ENCODE measurements at regions of chr16 and their contacts with region 1.

Region 1: DNA sequence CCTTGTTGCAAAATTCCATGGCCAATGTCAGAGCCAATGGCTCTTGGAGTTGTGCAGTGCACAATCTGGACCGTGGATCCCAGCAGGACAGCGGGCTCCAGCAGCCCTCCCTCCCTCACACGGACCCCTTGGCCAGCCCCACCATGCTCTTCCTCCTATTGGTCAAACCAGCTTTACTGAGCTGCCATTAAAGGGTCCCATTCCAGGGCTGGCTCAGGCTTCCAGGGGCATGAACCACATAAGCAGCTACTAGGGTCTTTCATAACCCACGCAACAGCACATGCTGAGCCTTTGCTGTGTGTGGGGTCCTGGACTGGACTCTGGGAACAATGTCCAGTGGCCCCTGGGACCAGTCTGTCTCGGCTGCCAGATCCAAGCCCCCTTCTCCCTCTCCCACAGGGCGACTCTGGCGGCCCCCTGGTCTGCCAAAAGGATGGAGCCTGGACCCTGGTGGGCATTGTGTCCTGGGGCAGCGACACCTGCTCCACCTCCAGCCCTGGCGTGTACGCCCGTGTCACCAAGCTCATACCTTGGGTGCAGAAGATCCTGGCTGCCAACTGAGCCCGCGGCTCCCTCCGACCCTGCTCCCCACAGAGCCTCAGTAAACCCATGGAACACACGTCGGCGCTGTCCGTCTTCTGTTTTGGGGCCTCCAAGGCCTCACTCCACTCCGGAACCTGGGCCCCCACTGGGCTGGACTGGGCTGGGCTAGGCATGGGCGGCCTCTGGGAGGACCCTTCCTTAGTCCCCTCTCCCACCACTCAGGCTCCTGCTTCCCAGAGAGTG is 5.7 kb downstream of the CTRB1 start:
- DNase-seq: no peak
- ATAC-seq: no peak
- H3K4me3 ChIP-seq: no peak overlapping the region
- H3K27ac ChIP-seq: no peak overlapping the region
- H3K4me1 ChIP-seq: no peaks in the 10 kb centered on the region
- H3K27me3 ChIP-seq: no peaks in the 10 kb centered on the region
- CTCF ChIP-seq: no peak

Region 2: GRCh38 chr16:74771656-74772315 is 452.7 kb before region 1 on chr16:
- intact Hi-C with region 1: no loop called
- DNase-seq: no peak
- ATAC-seq: no peak
- H3K4me3 ChIP-seq: no peak overlapping the region
- H3K27ac ChIP-seq: no peak overlapping the region
- H3K4me1 ChIP-seq: peaks cover 3% of the 10 kb centered on the region
- H3K27me3 ChIP-seq: peaks cover 36% of the 10 kb centered on the region
- CTCF ChIP-seq: no peak

Region 3: DNA sequence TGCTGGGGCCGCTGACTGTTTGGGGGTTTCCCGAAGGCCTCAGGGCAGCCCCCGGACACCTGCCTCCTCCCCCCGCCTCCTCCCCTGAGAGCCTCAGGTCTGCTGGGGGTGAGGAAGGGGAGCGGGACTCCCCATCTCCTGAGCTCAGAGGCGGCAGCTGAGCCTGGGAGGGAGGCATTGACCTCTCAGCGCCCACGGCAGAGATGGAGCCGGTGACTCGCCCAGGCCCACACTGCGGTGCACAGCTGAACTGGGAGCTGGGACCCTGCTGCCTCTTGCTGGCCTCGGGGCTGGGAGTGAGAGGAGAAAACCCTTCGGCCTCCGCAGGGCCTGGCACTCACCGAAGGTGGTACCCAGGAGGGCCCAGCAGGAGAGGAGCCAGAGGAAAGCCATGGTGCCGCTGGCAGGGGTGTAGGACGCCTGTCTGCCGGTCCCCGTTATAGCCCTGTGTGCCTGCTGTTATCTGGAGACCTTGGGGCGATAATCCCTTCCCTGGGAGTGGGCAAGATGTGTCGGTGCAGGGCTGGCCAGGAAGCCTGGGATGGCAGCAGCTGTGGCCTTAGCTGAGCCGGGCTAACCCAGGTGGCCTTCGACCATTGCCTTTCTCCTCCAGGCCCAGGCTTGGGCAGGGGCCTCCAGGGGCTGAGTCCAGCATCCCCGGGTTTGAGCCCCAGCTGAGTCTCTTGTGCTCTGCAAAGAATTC is 17.6 kb before region 1 on chr16 and contains the start of gene CTRB2:
- intact Hi-C with region 1: loop called (anchors 2 kb)
- DNase-seq: no peak
- ATAC-seq: no peak
- H3K4me3 ChIP-seq: no peak within 1 kb of the TSS
- H3K27ac ChIP-seq: no peak within 1 kb of the TSS
- H3K4me1 ChIP-seq: no peaks in the 10 kb centered on the region
- H3K27me3 ChIP-seq: no peaks in the 10 kb centered on the region
- CTCF ChIP-seq: no peak
- total RNA-seq, gene CTRB2: 0.78 TPM

Region 4: DNA sequence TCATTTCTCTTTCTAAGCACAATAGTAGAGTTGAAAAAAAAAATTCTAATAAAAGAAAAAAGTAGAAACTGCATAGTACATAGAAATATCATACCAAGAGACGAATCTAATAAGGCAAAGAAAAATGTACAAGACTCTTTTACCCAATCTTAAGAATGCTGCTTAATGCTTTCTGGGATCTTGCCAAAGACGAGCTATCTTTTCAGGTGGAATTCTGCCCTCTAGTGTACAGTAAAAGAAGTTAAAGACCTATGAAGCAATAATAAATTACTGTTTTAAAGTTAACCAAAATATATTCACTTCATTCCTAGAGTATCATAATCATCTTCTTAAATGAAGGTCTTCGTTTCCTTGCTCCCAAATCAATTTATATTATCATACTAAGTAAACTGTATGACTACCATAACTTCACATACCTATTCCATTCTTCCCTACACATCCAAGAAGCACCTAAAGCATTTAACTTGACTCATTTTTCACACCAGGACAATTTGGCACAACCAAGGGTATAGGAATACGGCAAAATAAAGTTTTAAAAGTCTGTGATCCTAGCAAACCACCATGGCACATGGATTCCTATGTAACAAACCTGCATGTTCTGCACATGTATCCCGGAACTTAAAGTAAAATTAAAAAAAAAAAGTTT is 161.1 kb after region 1 on chr16:
- intact Hi-C with region 1: loop called (anchors 5 kb)
- DNase-seq: no peak
- ATAC-seq: peak; percentile 77
- H3K4me3 ChIP-seq: no peak overlapping the region
- H3K27ac ChIP-seq: no peak overlapping the region
- H3K4me1 ChIP-seq: peaks cover 19% of the 10 kb centered on the region
- H3K27me3 ChIP-seq: no peaks in the 10 kb centered on the region
- CTCF ChIP-seq: peak; percentile 81